Pancreas (tissue), 10 donors: ENCODE measurements at regions of chr1 and their contacts with region 1.

Region 1: DNA sequence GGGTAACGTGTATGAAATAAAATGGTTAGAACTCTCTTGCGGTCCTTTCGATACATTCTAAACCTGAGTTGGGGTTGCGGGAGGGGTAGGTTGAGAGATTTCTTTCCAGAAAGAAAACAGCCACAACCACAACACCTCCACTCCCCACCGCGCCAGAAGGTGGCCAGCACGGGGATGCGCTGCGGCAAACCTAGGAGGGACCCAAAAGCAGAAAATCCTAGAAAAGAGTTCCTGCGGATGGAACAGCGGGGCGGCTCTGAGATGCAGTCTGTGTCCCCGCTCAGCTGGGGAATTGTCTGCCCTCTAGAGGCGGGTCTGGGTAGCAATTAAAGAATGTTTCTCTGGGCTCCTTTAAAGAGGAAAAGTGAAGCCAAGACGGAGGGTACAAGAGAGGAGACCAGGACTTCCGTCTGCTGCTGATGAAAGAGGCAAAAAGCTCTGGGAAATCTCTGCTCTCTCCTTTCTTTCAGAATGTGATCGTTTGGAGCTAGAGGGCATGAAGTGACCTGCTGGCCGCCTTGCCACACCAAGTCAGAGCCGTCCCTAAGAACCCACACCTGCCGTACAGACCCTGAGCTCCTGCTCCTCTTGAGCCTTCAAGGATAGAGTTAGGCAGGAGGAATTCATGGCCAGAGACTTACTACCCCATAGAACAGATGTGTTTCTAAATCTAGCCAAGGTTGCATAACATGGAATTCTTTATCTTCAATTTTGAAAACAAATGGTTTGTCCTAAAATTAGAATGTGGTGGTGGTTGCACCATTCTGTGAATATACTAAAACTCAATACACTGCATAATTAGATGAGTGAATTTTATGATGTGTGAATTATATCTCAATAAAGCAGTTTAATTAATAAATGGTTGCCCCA is 46.5 kb upstream of the COA6 start:
- DNase-seq: peak in 5 of 6 donors; percentile 18 to 69 (median 45)
- ATAC-seq: peak; percentile 69 to 98 (median 95)
- H3K4me3 ChIP-seq: peak overlapping the region in 1 of 4 donors; percentile 31
- H3K27ac ChIP-seq: no peak overlapping the region
- H3K4me1 ChIP-seq: peaks cover 0 to 2% (median 0%) of the 10 kb centered on the region in 3 donors
- H3K27me3 ChIP-seq: no peaks in the 10 kb centered on the region
- CTCF ChIP-seq: peak; percentile 62 to 82 (median 71)

Region 2: GRCh38 chr1:233859446-233859845 is 467.3 kb before region 1 on chr1:
- intact Hi-C with region 1: no loop called
- DNase-seq: no peak
- ATAC-seq: no peak
- H3K4me3 ChIP-seq: no peak overlapping the region
- H3K27ac ChIP-seq: no peak overlapping the region
- H3K4me1 ChIP-seq: no peaks in the 10 kb centered on the region
- H3K27me3 ChIP-seq: no peaks in the 10 kb centered on the region
- CTCF ChIP-seq: no peak

Region 3: DNA sequence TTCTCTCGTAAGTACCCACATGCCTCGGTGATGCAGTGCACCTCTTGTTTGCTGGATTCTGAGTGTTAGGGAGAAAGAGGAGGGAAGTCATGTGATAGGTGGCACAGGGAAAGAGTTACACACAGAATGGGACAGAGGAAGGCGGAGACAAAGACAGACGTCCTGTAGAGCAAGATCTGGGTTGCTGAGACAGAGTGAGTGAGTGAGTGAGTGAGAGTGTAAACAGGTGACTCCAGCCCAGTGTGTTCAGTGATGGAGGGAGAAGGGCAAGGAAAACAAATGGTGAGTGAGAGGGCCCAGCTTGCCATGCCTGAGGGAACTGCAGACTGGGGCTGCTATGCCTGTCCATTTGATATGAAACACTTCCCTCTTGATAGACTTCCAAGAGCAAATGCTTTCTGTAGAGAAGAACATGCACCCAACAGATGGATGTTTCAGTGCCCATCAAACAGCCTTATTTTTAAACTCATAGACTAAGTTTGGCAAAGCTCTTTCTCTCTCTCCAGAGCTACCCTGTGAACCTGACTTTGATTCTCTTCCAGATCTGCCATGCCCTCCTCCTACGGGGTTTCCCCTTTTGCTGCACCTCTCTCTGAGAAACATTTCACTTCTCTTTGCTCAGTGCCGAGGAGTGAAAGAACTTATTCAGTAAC is 163.3 kb before region 1 on chr1:
- intact Hi-C with region 1: loop called in 1 of 3 experiments (anchors 10 kb)
- DNase-seq: no peak
- ATAC-seq: no peak
- H3K4me3 ChIP-seq: no peak overlapping the region
- H3K27ac ChIP-seq: no peak overlapping the region
- H3K4me1 ChIP-seq: no peaks in the 10 kb centered on the region
- H3K27me3 ChIP-seq: no peaks in the 10 kb centered on the region
- CTCF ChIP-seq: no peak

Region 4: GRCh38 chr1:234212764-234213657 is 113.7 kb before region 1 on chr1:
- intact Hi-C with region 1: loop called in 1 of 3 experiments (anchors 10 kb)
- DNase-seq: peak in 3 of 6 donors; percentile 35 to 63 (median 40)
- ATAC-seq: peak; percentile 45 to 75 (median 67)
- H3K4me3 ChIP-seq: no peak overlapping the region
- H3K27ac ChIP-seq: no peak overlapping the region
- H3K4me1 ChIP-seq: no peaks in the 10 kb centered on the region
- H3K27me3 ChIP-seq: no peaks in the 10 kb centered on the region
- CTCF ChIP-seq: peak in 3 of 4 donors; percentile 40 to 62 (median 41)

Region 5: GRCh38 chr1:234862944-234863515 is 536.3 kb after region 1 on chr1:
- intact Hi-C with region 1: no loop called
- DNase-seq: peak in 5 of 6 donors; percentile 41 to 73 (median 50)
- ATAC-seq: peak in 3 of 4 donors; percentile 72 to 76 (median 75)
- H3K4me3 ChIP-seq: no peak overlapping the region
- H3K27ac ChIP-seq: peak overlapping the region; percentile 11 to 71 (median 49)
- H3K4me1 ChIP-seq: peaks cover 4 to 16% (median 4%) of the 10 kb centered on the region in 3 donors
- H3K27me3 ChIP-seq: no peaks in the 10 kb centered on the region
- CTCF ChIP-seq: no peak